Panc1 (cell line): ENCODE measurements at regions of chr9 and their contacts with region 1.

Region 1: DNA sequence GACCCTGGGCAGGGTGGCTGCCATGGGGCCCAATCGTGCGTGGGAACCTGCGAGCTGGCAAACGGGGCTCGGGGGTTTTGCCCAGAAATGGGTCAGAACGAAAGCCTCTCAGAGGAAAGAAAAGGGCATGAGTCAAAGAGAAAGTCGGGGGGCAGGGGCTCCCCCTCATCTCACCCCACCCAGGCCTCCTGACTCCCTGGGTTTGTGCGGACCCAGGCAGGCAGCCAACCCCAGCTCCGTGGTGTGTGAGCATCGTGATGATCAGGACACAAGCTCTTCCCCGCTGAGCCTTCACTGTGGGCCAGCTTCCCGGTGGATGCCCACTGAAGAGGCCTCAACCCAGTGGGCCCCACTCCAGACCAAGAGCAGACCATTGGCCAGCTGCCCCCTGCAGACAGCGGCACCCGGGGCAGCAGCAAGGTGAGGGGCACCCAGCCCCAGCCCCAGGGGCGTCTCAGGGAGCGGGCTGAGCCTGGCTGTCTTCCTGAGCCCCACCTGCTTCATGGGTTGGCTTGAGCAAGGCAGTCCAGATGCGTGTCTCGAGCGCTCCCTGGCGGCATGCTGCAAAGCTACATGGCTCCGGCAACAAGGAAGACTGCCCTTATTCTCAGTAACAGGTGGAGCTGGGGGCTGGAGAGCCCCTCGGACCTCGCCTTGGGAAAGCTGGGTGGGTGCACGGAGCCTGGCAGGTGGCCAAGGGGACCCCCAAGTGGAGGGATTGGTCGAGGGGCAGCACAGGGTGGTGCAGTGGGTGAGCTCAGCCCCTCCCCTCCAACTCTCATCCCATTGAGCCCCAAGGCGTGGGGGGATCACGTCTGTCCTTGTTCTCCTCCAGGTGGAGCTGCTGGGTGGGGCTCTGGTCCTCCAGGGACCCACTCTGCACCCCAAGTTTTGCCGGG is 3.2 kb upstream of the FUT7 start:
- DNase-seq: peak; percentile 55
- ATAC-seq: peak; percentile 93
- H3K4me3 ChIP-seq: peak overlapping the region in 1 of 2 experiments; percentile 14; a peak in 1 of 4 replicates
- H3K27ac ChIP-seq: no peak overlapping the region
- H3K4me1 ChIP-seq: peaks cover 5% of the 10 kb centered on the region
- H3K27me3 ChIP-seq: no peaks in the 10 kb centered on the region
- CTCF ChIP-seq: peak; percentile 90

Region 2: DNA sequence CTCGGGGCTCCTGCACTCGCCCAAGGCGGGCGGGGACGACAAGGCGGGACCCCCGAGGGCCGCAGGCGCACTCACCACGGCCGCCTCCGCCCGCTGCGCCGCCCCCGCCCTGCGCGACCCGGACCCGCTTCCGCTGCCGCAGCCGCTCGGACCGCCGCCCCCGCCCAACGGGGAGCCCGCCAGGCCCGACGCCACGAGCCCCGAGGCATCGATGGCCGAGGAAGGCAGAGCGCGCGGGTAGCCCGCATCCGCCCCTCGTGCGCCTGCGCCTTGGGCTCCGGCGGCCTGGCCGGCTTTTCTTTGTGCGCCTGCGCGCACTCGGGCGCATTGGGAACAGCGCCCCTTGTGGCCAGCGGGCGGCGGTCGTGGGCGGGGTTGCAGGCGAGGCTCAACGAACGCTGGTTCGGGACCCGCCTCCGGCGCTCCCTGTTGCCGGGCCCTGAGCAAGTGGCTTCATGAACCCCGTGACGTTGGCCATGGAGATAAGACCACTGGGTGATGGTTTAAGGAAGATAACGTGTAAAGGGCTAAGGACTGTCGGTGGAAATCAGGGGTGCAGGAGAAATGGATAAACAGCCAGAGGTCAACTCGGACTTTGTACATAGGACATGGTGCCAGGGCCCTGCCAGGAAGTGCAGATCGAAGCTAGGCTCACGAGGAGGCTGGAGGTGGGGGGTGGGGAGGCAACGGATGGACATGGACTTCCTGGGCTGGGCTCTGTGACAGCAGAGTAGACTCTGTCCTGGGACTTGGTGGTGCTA is 90.4 kb before region 1 on chr9 and contains the starts of genes C8G and FBXW5:
- CTCF ChIA-PET with region 1: interaction called, 22 read pairs
- POLR2A ChIA-PET with region 1: no interaction called
- in situ Hi-C with region 1: no loop called
- intact Hi-C with region 1: loop called (anchors 10 kb)
- DNase-seq: peak; percentile 62
- ATAC-seq: peak; percentile 68
- H3K4me3 ChIP-seq: peak within 1 kb of the TSS; percentile 64
- H3K27ac ChIP-seq: peak within 1 kb of the TSS; percentile 80
- H3K4me1 ChIP-seq: peaks cover 27% of the 10 kb centered on the region
- H3K27me3 ChIP-seq: no peaks in the 10 kb centered on the region
- CTCF ChIP-seq: peak; percentile 97
- total RNA-seq, gene C8G: 2.9 TPM
- total RNA-seq, gene FBXW5: 72.6 TPM

Region 3: DNA sequence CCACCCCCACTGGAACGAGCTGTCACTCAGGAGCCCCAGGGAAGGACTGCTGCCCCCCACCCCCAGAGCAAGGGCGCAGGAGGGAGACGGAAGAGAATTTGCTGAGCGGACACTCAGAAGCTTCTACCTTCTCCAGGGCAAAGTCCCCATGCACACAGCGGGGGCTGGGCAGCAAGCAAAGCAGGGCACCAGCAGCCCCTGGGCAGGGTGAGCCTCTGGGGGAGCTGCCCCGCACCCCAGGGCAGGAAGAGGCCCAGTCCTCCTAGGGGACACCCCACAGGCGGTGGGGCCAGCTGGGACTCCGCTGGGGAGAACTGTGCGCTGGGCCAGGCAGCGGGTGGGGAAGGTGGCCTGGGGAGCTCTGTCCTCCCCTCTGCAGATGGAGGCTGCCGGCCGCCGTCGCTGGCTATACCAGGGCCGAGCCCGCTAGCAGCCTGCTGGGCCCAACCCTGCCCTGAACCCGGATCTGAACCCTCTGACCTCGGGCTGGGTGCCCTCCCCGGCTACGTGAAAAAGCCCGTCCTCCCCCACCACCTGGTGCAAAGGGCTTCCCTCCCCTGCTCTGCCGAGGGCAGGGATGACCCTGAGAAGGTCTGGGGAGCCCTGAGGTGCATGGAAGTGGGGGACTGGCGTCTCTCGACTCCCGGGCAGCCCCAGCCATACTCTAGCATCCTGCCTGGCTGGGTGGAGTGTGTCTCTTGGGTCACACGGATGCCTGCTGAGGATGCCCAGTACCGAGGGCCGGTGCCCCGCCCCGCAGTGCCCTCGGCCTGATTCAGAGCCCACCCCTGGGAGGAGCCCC is 195.0 kb after region 1 on chr9:
- CTCF ChIA-PET with region 1: no interaction called
- POLR2A ChIA-PET with region 1: interaction called, 16 read pairs
- in situ Hi-C with region 1: no loop called
- intact Hi-C with region 1: no loop called
- DNase-seq: no peak
- ATAC-seq: no peak
- H3K4me3 ChIP-seq: no peak overlapping the region
- H3K27ac ChIP-seq: no peak overlapping the region
- H3K4me1 ChIP-seq: peaks cover 4% of the 10 kb centered on the region
- H3K27me3 ChIP-seq: no peaks in the 10 kb centered on the region
- CTCF ChIP-seq: no peak